B cell (primary cell): ENCODE measurements at regions of chr7 and their contacts with region 1.

Region 1: GRCh38 chr7:35624299-35625186 is 70.4 kb downstream of the HERPUD2 start:
- DNase-seq: peak; percentile 69
- ATAC-seq: peak; percentile 74
- H3K4me3 ChIP-seq: no peak overlapping the region
- H3K4me3 Mint-ChIP-seq: no peak overlapping the region
- H3K27ac ChIP-seq: no peak overlapping the region
- H3K27ac Mint-ChIP-seq: no peak overlapping the region
- H3K4me1 ChIP-seq: no peaks in the 10 kb centered on the region
- H3K4me1 Mint-ChIP-seq: peaks cover 5% of the 10 kb centered on the region
- H3K27me3 ChIP-seq: no peaks in the 10 kb centered on the region
- H3K27me3 Mint-ChIP-seq: no peaks in the 10 kb centered on the region
- CTCF ChIP-seq: peak; percentile 94

Region 2: GRCh38 chr7:34823640-34824258 is 800.8 kb before region 1 on chr7:
- CTCF ChIA-PET with region 1: no interaction called
- POLR2A ChIA-PET with region 1: no interaction called
- intact Hi-C with region 1: loop called (anchors 5 kb)
- DNase-seq: peak; percentile 34
- ATAC-seq: no peak
- H3K4me3 ChIP-seq: no peak overlapping the region
- H3K4me3 Mint-ChIP-seq: no peak overlapping the region
- H3K27ac ChIP-seq: no peak overlapping the region
- H3K27ac Mint-ChIP-seq: no peak overlapping the region
- H3K4me1 ChIP-seq: no peaks in the 10 kb centered on the region
- H3K4me1 Mint-ChIP-seq: no peaks in the 10 kb centered on the region
- H3K27me3 ChIP-seq: no peaks in the 10 kb centered on the region
- H3K27me3 Mint-ChIP-seq: peaks cover 3% of the 10 kb centered on the region
- CTCF ChIP-seq: peak; percentile 90

Region 3: GRCh38 chr7:35424869-35425495 is 199.6 kb before region 1 on chr7:
- CTCF ChIA-PET with region 1: interaction called, 55 read pairs
- POLR2A ChIA-PET with region 1: no interaction called
- intact Hi-C with region 1: no loop called
- DNase-seq: peak; percentile 65
- ATAC-seq: peak; percentile 73
- H3K4me3 ChIP-seq: no peak overlapping the region
- H3K4me3 Mint-ChIP-seq: no peak overlapping the region
- H3K27ac ChIP-seq: no peak overlapping the region
- H3K27ac Mint-ChIP-seq: no peak overlapping the region
- H3K4me1 ChIP-seq: no peaks in the 10 kb centered on the region
- H3K4me1 Mint-ChIP-seq: no peaks in the 10 kb centered on the region
- H3K27me3 ChIP-seq: peaks cover 0 to 9% (median 0%) of the 10 kb centered on the region in 4 experiments
- H3K27me3 Mint-ChIP-seq: peaks cover 22% of the 10 kb centered on the region
- CTCF ChIP-seq: peak; percentile 84

Region 4: GRCh38 chr7:35613096-35613495 is 11.4 kb before region 1 on chr7:
- CTCF ChIA-PET with region 1: interaction called, 29 read pairs
- POLR2A ChIA-PET with region 1: no interaction called
- intact Hi-C with region 1: no loop called
- DNase-seq: no peak
- ATAC-seq: no peak
- H3K4me3 ChIP-seq: no peak overlapping the region
- H3K4me3 Mint-ChIP-seq: no peak overlapping the region
- H3K27ac ChIP-seq: no peak overlapping the region
- H3K27ac Mint-ChIP-seq: no peak overlapping the region
- H3K4me1 ChIP-seq: no peaks in the 10 kb centered on the region
- H3K4me1 Mint-ChIP-seq: no peaks in the 10 kb centered on the region
- H3K27me3 ChIP-seq: no peaks in the 10 kb centered on the region
- H3K27me3 Mint-ChIP-seq: no peaks in the 10 kb centered on the region
- CTCF ChIP-seq: no peak

Region 5: DNA sequence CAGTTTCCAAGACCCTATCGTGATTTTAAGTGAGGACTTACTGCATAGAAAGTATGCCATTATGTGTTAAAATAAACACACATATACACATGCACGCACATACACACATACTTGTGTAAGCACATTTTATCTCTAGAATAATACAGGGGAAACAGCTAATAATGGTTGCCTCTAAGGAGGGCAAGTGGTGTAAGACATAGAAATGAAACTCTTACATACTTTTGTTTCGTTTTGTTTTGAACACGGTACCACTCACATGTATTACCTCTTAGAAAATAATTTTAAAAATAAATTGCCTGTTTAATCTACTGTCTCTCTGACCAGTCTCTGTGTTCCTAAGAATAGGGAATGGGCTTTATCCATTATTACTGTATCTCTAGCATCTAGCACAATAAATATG is 21.1 kb after region 1 on chr7:
- CTCF ChIA-PET with region 1: interaction called, 10 read pairs
- POLR2A ChIA-PET with region 1: no interaction called
- intact Hi-C with region 1: no loop called
- DNase-seq: no peak
- ATAC-seq: no peak
- H3K4me3 ChIP-seq: no peak overlapping the region
- H3K4me3 Mint-ChIP-seq: no peak overlapping the region
- H3K27ac ChIP-seq: no peak overlapping the region
- H3K27ac Mint-ChIP-seq: no peak overlapping the region
- H3K4me1 ChIP-seq: peaks cover 7 to 19% of the 10 kb centered on the region in 2 donors
- H3K4me1 Mint-ChIP-seq: peaks cover 47% of the 10 kb centered on the region
- H3K27me3 ChIP-seq: no peaks in the 10 kb centered on the region
- H3K27me3 Mint-ChIP-seq: no peaks in the 10 kb centered on the region
- CTCF ChIP-seq: no peak

Region 6: DNA sequence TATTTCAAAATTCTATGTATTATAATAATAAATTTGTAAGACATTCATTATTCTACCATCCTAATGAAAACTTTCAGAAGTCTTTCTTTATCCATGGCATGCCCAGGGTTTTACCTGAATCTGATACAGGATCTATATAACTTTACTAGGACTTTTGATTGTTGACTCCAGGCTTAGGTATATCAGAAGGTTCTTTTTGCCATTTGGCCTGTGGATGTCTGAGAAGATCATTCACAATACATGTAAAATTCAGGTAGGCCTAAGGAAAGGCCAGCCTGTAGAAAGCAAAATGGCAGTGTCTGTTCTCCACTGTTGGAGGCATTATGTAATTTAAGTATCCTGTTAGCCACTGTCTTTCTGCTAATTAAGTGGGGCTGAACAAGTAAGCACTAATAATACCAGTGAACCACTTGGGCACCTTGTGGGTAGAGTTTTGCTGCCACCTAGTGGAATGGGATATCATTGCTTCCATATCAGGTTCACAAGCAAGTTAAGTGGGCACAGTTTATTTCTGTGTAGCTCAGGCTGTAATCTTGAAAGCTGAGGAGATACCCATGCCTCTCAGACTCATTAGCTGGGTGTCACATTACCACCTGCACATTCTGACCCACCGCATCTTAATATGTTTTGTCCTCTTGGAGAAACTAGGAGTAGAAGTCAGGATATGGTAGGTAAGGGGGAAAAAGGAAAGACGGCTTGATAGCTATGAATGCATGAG is 281.8 kb after region 1 on chr7:
- CTCF ChIA-PET with region 1: interaction called, 19 read pairs
- POLR2A ChIA-PET with region 1: no interaction called
- intact Hi-C with region 1: loop called (anchors 5 kb)
- DNase-seq: peak; percentile 85
- ATAC-seq: peak; percentile 95
- H3K4me3 ChIP-seq: no peak overlapping the region
- H3K4me3 Mint-ChIP-seq: no peak overlapping the region
- H3K27ac ChIP-seq: peak overlapping the region in 1 of 2 donors; percentile 55
- H3K27ac Mint-ChIP-seq: peak overlapping the region; percentile 73
- H3K4me1 ChIP-seq: peaks cover 0 to 2% of the 10 kb centered on the region in 2 donors
- H3K4me1 Mint-ChIP-seq: peaks cover 5% of the 10 kb centered on the region
- H3K27me3 ChIP-seq: no peaks in the 10 kb centered on the region
- H3K27me3 Mint-ChIP-seq: no peaks in the 10 kb centered on the region
- CTCF ChIP-seq: peak; percentile 96